Naive thymus-derived CD4-positive, alpha-beta T cell (primary cell): ENCODE measurements at regions of chr9 and their contacts with region 1.

Region 1: DNA sequence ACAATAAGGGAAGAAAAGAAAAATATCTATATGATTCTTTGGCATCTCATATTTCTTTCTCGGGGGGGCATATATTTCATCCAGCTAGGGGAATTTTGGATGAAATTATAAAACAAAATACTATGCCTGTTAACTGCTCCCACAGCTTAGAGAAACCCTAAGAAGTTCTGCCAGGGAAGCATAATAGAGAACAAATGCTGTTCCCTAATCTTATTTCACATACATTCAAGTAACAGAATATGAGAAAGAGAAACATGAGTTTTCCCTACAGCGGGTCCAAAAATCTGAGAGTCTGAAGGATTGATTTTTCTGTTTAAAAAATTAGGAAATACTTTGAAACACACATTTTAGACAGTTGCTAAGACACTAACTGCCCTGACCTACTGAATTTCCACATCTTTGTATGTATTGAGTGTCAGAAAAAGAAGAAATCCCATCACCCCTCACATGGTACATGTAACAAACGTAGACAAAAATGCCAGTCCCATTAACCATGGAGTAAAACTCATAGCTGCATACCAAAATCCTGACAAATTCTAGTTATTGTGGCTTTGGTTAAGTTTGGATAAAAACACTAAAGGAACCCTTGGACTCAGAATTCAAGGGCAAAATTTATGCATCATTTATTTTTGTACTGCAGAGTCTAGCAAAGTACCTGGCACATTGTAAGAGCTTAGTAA is 620.2 kb upstream of the DMAC1 start:
- DNase-seq: no peak
- ATAC-seq: no peak
- H3K4me3 ChIP-seq: no peak overlapping the region
- H3K4me3 Mint-ChIP-seq: no peak overlapping the region
- H3K27ac ChIP-seq: no peak overlapping the region
- H3K27ac Mint-ChIP-seq: no peak overlapping the region
- H3K4me1 ChIP-seq: no peaks in the 10 kb centered on the region
- H3K4me1 Mint-ChIP-seq: no peaks in the 10 kb centered on the region
- H3K27me3 ChIP-seq: no peaks in the 10 kb centered on the region
- H3K27me3 Mint-ChIP-seq: peaks cover 0 to 11% (median 6%) of the 10 kb centered on the region in 5 donors

Region 2: DNA sequence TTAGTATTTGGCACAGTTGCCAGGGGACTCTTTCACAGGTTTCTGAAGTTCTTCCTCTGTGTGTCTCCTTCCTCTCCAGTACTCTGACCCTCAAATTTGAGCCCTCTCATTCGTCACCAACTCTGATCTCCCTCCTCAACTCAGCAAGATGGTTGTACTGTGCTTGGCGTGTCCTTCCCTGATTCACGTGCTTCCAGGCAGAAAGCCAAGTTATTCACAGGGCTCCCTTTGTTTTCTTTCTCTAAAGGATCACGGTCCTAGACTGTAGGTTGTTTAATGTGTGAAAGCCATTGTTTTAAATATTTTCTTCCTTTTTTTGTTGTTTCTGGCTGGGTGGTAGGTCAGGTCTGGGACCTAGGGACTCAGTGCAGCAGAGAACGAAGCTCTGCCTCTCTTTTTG is 763.1 kb before region 1 on chr9:
- CTCF ChIA-PET with region 1: no interaction called
- POLR2A ChIA-PET with region 1: no interaction called
- intact Hi-C with region 1: loop called in 1 of 2 experiments (anchors 10 kb)
- DNase-seq: no peak
- ATAC-seq: no peak
- H3K4me3 ChIP-seq: no peak overlapping the region
- H3K4me3 Mint-ChIP-seq: no peak overlapping the region
- H3K27ac ChIP-seq: no peak overlapping the region
- H3K27ac Mint-ChIP-seq: no peak overlapping the region
- H3K4me1 ChIP-seq: no peaks in the 10 kb centered on the region
- H3K4me1 Mint-ChIP-seq: peaks cover 0 to 26% (median 10%) of the 10 kb centered on the region in 7 donors
- H3K27me3 ChIP-seq: no peaks in the 10 kb centered on the region
- H3K27me3 Mint-ChIP-seq: no peaks in the 10 kb centered on the region

Region 3: GRCh38 chr9:8477450-8477849 is 57.7 kb after region 1 on chr9:
- CTCF ChIA-PET with region 1: no interaction called
- POLR2A ChIA-PET with region 1: no interaction called
- intact Hi-C with region 1: loop called in 1 of 2 experiments (anchors 10 kb)
- DNase-seq: no peak
- ATAC-seq: no peak
- H3K4me3 ChIP-seq: no peak overlapping the region
- H3K4me3 Mint-ChIP-seq: no peak overlapping the region
- H3K27ac ChIP-seq: no peak overlapping the region
- H3K27ac Mint-ChIP-seq: no peak overlapping the region
- H3K4me1 ChIP-seq: no peaks in the 10 kb centered on the region
- H3K4me1 Mint-ChIP-seq: no peaks in the 10 kb centered on the region
- H3K27me3 ChIP-seq: no peaks in the 10 kb centered on the region
- H3K27me3 Mint-ChIP-seq: no peaks in the 10 kb centered on the region